Adrenal gland (tissue), 19 donors: ENCODE measurements at regions of chr14 and their contacts with region 1.

Region 1: DNA sequence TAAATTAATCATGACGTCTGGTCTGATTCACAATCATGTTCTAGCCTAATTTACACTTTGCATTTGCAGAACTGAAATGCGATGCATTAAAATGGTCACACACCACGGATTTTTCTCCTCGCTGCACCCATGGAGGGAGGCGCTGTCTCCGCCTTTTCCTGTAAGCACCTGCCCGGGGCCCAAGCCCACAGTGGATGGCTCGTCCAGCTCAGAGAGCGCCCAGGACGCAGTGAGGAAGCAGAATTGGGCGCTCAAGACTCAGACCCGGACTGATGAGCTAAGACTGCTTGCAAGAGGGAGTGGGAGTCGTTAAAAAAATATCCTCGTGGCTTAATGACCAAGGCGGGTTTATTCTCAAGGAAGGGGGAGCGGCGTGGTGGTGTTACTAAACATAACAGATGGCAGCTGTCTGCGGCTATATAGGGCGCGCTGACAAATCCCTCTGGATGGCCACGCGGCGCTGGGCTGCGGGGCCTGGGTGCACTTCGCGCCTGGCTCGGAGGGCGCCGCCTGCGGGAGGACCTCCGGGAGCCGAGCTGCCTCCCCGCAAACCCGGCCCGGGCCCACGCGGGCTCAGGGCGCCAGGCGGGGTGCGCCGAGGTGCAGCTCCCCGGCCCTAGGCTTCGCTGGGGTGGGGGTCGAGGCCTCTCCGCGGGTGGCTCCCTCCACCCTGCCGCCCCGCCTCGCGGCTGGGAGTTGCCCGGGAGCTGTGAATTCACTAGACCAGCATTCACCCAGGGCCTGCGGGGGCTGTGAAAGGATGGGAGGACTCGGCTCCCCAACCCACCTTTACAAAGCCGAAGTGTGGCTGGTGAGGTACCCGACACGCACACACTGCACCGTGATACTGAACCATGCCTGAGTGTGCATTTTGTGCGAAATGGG is 78.7 kb downstream of the PPM1A start:
- DNase-seq: peak in 1 of 7 donors; percentile 59
- H3K4me3 ChIP-seq: peak overlapping the region in 1 of 4 donors; percentile 23
- H3K27ac ChIP-seq: peak overlapping the region in 1 of 5 donors; percentile 24
- H3K4me1 ChIP-seq: no peaks in the 10 kb centered on the region
- H3K27me3 ChIP-seq: peaks cover 10% of the 10 kb centered on the region
- CTCF ChIP-seq: no peak
- POLR2A ChIP-seq: no peak

Region 2: DNA sequence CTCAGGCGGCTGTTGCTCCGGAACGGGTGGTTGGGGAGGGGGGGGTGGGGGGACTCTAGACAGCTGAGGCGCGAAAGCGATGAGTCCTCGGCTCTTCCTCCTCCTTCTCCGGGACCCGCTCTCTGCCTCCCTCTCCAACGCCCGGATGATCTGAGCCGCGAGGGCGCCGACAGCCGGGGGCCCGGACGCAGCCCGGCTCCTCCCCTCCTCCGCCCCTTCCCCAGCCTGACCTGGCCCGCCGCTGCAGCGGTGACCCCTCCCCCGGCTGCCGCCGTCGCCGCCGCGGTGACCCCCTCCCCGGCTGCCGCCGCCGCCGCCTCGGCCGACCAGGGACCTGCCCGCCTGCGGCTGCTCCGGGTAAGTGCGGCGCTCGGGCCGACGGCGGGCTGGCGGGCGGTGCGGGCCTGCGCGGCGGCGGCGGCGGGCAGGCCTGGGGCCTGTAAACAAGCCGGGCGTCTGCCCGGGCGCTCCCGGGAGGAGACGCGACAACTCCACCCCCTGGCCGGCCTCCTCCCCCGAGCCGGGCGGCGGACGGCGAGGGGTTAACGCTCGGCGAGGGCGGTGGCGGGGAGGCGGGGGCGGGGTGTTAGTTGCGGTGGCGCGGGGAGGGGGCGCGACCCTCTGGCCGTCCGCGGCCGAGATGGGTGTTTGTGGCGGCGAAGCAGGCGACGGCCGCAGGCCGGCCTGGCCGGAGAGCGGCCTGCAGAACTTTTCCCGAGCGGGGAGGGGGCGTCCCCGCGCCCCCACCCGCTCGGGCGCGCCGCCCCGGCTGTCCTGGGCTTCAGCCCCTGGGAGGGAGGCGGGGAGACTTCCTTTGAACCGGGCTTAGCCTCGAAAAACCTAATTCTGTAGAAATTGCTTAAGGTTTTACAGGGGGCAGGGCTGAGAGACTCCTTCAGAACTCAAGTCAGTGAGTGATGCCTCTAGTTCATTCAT is 78.1 kb before region 1 on chr14:
- intact Hi-C with region 1: loop called in 1 of 2 experiments (anchors 10 kb)
- DNase-seq: peak; percentile 67 to 77 (median 73)
- H3K4me3 ChIP-seq: peak overlapping the region in 3 of 4 donors; percentile 77 to 90 (median 89)
- H3K27ac ChIP-seq: peak overlapping the region in 4 of 5 donors; percentile 96 to 100 (median 100)
- H3K4me1 ChIP-seq: peaks cover 23 to 45% of the 10 kb centered on the region in 2 donors
- H3K27me3 ChIP-seq: no peaks in the 10 kb centered on the region
- CTCF ChIP-seq: no peak
- POLR2A ChIP-seq: peak in 1 of 2 donors; percentile 38